ENCODE measurements at regions of chr7 and their contacts with region 1.

Region 1: DNA sequence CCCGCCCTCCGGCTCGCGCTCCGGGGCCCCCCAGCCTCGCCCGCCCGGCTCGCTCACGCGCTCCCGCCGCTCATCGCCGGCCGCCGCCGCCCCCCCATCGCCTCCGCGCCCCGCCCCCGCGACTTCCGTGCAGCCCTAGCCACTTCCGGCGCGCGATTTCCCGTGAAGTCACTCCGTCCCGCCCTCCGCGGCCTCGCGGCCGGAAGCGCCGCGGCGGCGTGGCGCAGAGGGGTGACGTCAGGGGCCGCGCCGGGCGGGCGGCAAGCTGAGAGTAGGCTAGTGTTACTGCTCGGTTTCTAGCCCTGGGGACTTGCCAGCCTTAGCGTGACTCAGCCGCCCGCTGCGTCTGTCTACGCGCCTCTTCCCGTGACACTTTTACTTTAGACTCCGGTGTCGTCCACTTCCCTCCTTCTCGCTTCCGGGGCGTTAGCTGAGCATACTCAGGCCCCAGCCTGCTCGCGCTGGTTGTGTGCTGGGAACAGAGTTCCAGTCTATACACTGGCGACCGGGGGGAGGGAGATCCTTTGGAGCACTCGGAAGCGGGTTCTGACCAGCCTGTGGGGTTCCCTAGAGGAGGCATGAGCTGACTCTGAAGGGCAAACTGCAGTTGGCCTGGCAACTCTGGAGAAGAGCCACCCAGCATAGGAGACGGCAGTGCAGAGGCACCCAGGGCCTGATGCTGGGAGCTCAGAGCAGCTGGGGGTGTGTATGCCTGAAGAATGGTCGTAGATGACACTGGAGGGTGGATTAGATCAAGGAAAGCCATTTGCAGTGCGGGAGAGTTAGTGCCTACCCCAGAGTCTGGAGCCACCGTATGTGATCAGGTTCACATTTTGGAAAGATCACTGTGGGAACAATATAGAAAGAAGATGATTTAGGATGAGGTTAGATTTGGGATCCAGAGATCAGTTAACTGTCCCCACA is at the start of gene PURB:
- DNase-seq: peak; percentile 97 to 99 (median 97)
- ATAC-seq: peak; percentile 92
- H3K4me3 ChIP-seq: peak within 1 kb of the TSS; percentile 88
- H3K4me3 Mint-ChIP-seq: peak within 1 kb of the TSS; percentile 92 to 97 (median 93)
- H3K27ac ChIP-seq: peak within 1 kb of the TSS; percentile 99
- H3K27ac Mint-ChIP-seq: peak within 1 kb of the TSS; percentile 98 to 100 (median 99)
- H3K4me1 ChIP-seq: peaks cover 26 to 50% of the 10 kb centered on the region in 2 donors
- H3K4me1 Mint-ChIP-seq: peaks cover 7 to 61% (median 46%) of the 10 kb centered on the region in 7 donors
- H3K27me3 ChIP-seq: no peaks in the 10 kb centered on the region
- H3K27me3 Mint-ChIP-seq: peaks cover 0 to 2% (median 0%) of the 10 kb centered on the region in 5 donors
- total RNA-seq, gene PURB: 16.5 to 30.5 (median 23.3) TPM

Region 2: DNA sequence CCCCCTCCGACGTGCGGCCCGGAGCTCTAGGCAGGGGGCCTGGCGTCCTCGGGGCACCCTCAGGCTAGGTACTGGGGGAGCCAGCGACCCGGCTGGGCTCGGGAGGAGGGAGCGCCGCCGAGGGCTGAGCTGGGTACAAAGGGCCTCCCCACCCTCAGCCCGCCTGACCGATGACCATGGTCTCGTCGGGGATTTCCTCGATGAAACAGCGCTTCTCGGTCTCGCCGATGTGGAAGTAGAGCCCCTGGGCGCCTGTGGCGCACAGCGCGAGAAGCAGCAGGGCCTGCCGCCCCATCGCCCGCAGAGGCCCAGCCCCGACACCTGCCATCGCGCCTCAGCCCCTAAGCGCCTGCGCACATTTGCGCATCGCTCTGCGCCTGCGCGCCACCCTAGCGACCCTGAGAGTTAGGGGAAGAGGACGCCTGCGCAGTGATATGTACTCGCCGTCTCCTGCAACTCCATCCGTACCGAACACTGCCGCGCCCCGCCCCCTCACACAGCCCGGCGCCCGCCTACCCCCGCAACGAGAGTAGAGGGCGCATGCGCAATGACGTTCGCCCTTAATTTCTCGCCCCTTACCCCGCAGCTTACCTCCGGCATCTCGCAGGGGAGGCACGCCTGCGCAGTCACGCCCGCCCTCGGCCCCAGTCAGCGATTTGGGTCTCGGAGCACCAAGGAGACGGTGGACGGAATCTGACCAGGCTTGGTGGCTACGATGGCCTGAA is 303.6 kb before region 1 on chr7 and contains the start of gene TMED4:
- CTCF ChIA-PET with region 1: no interaction called
- POLR2A ChIA-PET with region 1: interaction called, 12 read pairs
- intact Hi-C with region 1: loop called (anchors 1 kb)
- DNase-seq: peak; percentile 100
- ATAC-seq: peak; percentile 96
- H3K4me3 ChIP-seq: peak within 1 kb of the TSS; percentile 95
- H3K4me3 Mint-ChIP-seq: peak within 1 kb of the TSS; percentile 86 to 97 (median 92)
- H3K27ac ChIP-seq: peak within 1 kb of the TSS; percentile 90
- H3K27ac Mint-ChIP-seq: peak within 1 kb of the TSS; percentile 95 to 99 (median 98)
- H3K4me1 ChIP-seq: peaks cover 14 to 19% of the 10 kb centered on the region in 2 donors
- H3K4me1 Mint-ChIP-seq: peaks cover 13 to 43% (median 38%) of the 10 kb centered on the region in 7 donors
- H3K27me3 ChIP-seq: no peaks in the 10 kb centered on the region
- H3K27me3 Mint-ChIP-seq: peaks cover 0 to 12% (median 0%) of the 10 kb centered on the region in 5 donors
- total RNA-seq, gene TMED4: 70.0 to 98.5 (median 95.3) TPM

Region 3: GRCh38 chr7:44748045-44748947 is 137.4 kb before region 1 on chr7 and contains the start of gene ZMIZ2:
- CTCF ChIA-PET with region 1: no interaction called
- POLR2A ChIA-PET with region 1: interaction called, 9 read pairs
- intact Hi-C with region 1: loop called (anchors 1 kb)
- DNase-seq: peak; percentile 87 to 99 (median 93)
- ATAC-seq: peak; percentile 94
- H3K4me3 ChIP-seq: peak within 1 kb of the TSS; percentile 64
- H3K4me3 Mint-ChIP-seq: peak within 1 kb of the TSS; percentile 77 to 92 (median 88)
- H3K27ac ChIP-seq: peak within 1 kb of the TSS; percentile 98
- H3K27ac Mint-ChIP-seq: peak within 1 kb of the TSS; percentile 81 to 98 (median 92)
- H3K4me1 ChIP-seq: peaks cover 21 to 22% of the 10 kb centered on the region in 2 donors
- H3K4me1 Mint-ChIP-seq: peaks cover 22 to 63% (median 45%) of the 10 kb centered on the region in 7 donors
- H3K27me3 ChIP-seq: no peaks in the 10 kb centered on the region
- H3K27me3 Mint-ChIP-seq: no peaks in the 10 kb centered on the region
- total RNA-seq, gene ZMIZ2: 108 to 187 (median 144) TPM

Region 4: DNA sequence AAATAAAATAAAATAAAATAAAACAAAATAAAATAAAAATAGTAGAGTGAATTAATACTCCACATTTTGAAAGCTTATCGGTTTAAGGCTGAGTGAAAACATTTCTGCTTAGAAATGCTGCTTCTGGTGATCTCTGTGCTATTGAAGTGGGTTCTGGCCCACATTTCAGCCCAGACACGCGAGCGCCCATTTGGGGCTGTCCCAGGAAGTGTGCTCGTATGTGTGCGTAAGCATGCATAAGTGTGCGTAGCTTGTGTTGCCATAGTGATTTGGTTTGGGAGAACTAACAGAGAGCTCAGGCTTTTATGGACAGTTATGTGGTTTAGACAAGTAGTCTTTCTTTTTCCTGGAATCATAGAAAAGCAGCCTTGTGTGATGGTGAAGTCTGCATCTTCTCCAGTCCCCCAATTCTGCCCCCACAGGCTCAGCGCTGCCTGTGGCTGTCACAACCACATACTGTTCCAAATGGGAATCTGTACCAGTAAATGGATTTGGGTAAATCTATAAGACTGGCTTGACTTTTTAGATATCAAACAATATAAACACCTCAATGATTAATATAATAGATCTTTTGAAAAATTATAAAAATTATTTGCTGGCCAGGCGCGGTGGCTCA is 29.4 kb after region 1 on chr7:
- CTCF ChIA-PET with region 1: interaction called, 4 read pairs
- POLR2A ChIA-PET with region 1: interaction called, 5 read pairs
- intact Hi-C with region 1: loop called (anchors 1 kb)
- DNase-seq: peak in 8 of 9 donors; percentile 44 to 87 (median 74)
- ATAC-seq: peak; percentile 99
- H3K4me3 ChIP-seq: no peak overlapping the region
- H3K4me3 Mint-ChIP-seq: peak overlapping the region in 7 of 10 donors; percentile 12 to 71 (median 53)
- H3K27ac ChIP-seq: peak overlapping the region; percentile 48
- H3K27ac Mint-ChIP-seq: peak overlapping the region in 8 of 9 donors; percentile 61 to 92 (median 84)
- H3K4me1 ChIP-seq: no peaks in the 10 kb centered on the region
- H3K4me1 Mint-ChIP-seq: peaks cover 0 to 28% (median 5%) of the 10 kb centered on the region in 7 donors
- H3K27me3 ChIP-seq: no peaks in the 10 kb centered on the region
- H3K27me3 Mint-ChIP-seq: no peaks in the 10 kb centered on the region

Region 5: DNA sequence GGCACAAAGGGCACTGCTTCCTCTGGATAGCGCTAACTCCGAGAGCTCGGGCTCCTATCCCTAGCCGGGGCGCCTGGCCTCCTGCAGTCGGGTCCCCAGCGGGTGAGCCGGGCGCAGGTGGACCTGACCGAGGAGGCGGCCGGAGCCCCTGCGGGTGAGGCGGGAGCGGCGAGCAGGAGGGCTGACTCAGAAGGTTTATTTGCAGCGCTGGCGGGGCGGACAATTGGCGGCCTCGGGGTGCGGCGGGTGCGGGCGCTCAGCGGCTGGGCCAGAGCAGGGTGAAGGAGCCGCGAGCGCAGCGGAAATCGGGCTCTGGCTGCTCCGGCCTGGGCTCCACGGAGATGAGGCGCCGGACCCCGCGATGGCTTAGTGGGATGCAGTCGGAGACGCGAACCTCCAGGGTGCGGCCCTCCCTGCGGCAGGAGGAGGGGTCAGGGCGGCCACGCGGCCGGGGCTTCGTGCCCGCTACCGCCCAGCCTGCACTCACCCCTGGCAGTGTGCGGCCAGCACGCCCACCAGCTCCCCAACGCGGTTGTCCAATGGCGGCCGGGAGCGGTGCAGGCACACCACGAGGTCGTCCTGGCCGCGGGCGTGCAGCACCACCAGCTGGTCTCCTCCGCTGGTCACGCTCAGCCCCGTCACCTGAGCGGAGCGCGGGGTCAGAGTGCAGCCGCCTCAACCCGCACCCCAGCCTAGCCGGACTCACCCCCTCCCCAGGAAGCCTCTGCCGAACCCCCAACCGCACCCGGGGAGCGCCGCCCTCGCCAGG is 77.0 kb after region 1 on chr7:
- CTCF ChIA-PET with region 1: no interaction called
- POLR2A ChIA-PET with region 1: no interaction called
- intact Hi-C with region 1: no loop called
- DNase-seq: peak in 1 of 9 donors; percentile 22
- ATAC-seq: no peak
- H3K4me3 ChIP-seq: no peak overlapping the region
- H3K4me3 Mint-ChIP-seq: no peak overlapping the region
- H3K27ac ChIP-seq: no peak overlapping the region
- H3K27ac Mint-ChIP-seq: no peak overlapping the region
- H3K4me1 ChIP-seq: peaks cover 0 to 18% of the 10 kb centered on the region in 2 donors
- H3K4me1 Mint-ChIP-seq: peaks cover 6 to 22% (median 12%) of the 10 kb centered on the region in 7 donors
- H3K27me3 ChIP-seq: no peaks in the 10 kb centered on the region
- H3K27me3 Mint-ChIP-seq: no peaks in the 10 kb centered on the region

Region 6: DNA sequence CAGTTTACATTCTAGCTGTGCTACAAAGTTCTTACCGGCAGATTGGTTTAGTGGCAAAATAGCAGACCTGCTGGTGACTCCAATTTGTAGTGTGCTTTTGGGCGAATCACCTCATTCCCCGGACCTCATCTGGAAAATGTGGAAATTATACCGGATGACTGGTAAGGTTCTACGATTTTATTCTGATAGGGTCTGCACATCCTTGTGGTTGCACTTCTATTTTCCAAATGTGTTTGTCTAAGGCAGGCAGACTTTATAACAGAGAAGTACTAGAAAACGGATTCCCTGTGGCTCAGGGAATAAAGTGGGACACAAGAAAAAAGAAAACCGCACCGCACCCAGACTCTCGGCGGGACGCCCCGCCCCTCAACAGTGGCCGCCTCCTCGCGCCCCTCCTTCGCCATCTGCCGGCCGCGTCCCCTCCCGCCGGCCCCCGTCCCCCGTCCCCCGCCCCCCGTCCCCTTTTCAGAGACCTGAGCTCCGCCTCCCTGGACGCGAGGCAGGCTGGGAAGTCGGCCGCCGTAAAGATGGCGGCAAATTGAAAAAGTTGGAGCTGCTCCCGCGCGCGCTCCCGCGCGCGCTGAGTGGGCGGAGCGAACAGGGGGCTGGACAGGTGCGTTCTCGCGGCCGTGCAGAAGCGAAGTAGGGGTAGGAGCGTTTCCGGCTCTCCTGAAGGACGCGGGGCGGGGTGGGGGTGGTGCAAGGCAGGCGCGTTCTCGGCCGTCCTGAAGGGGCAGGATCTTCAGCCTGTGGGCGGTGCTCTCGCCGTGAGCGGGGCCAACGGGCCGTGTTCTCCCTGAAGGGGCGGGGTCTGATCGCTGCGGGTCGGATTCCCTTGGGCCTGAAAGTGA is 113.8 kb after region 1 on chr7:
- CTCF ChIA-PET with region 1: interaction called, 4 read pairs
- POLR2A ChIA-PET with region 1: interaction called, 9 read pairs
- intact Hi-C with region 1: loop called in 1 of 2 experiments (anchors 1 kb)
- DNase-seq: peak; percentile 92 to 99 (median 98)
- ATAC-seq: peak; percentile 93
- H3K4me3 ChIP-seq: peak overlapping the region; percentile 83
- H3K4me3 Mint-ChIP-seq: peak overlapping the region; percentile 85 to 100 (median 96)
- H3K27ac ChIP-seq: peak overlapping the region; percentile 80
- H3K27ac Mint-ChIP-seq: peak overlapping the region; percentile 82 to 99 (median 96)
- H3K4me1 ChIP-seq: peaks cover 18 to 34% of the 10 kb centered on the region in 2 donors
- H3K4me1 Mint-ChIP-seq: peaks cover 19 to 59% (median 49%) of the 10 kb centered on the region in 7 donors
- H3K27me3 ChIP-seq: no peaks in the 10 kb centered on the region
- H3K27me3 Mint-ChIP-seq: no peaks in the 10 kb centered on the region

Region 7: GRCh38 chr7:45111298-45112223 is 225.9 kb after region 1 on chr7 and contains the start of gene TBRG4:
- CTCF ChIA-PET with region 1: no interaction called
- POLR2A ChIA-PET with region 1: interaction called, 14 read pairs
- intact Hi-C with region 1: loop called (anchors 1 kb)
- DNase-seq: peak; percentile 88 to 96 (median 94)
- ATAC-seq: peak; percentile 94
- H3K4me3 ChIP-seq: peak within 1 kb of the TSS; percentile 80
- H3K4me3 Mint-ChIP-seq: peak within 1 kb of the TSS; percentile 93 to 100 (median 96)
- H3K27ac ChIP-seq: peak within 1 kb of the TSS; percentile 98
- H3K27ac Mint-ChIP-seq: peak within 1 kb of the TSS; percentile 98 to 100 (median 99)
- H3K4me1 ChIP-seq: peaks cover 17 to 45% of the 10 kb centered on the region in 2 donors
- H3K4me1 Mint-ChIP-seq: peaks cover 30 to 59% (median 50%) of the 10 kb centered on the region in 7 donors
- H3K27me3 ChIP-seq: no peaks in the 10 kb centered on the region
- H3K27me3 Mint-ChIP-seq: peaks cover 0 to 31% (median 0%) of the 10 kb centered on the region in 5 donors
- total RNA-seq, gene TBRG4: 93.7 to 143 (median 107) TPM

Region 8: GRCh38 chr7:45278763-45279398 is 393.2 kb after region 1 on chr7:
- CTCF ChIA-PET with region 1: no interaction called
- POLR2A ChIA-PET with region 1: no interaction called
- intact Hi-C with region 1: no loop called
- DNase-seq: no peak
- ATAC-seq: no peak
- H3K4me3 ChIP-seq: no peak overlapping the region
- H3K4me3 Mint-ChIP-seq: no peak overlapping the region
- H3K27ac ChIP-seq: no peak overlapping the region
- H3K27ac Mint-ChIP-seq: no peak overlapping the region
- H3K4me1 ChIP-seq: no peaks in the 10 kb centered on the region
- H3K4me1 Mint-ChIP-seq: no peaks in the 10 kb centered on the region
- H3K27me3 ChIP-seq: peaks cover 0 to 5% of the 10 kb centered on the region in 2 donors
- H3K27me3 Mint-ChIP-seq: peaks cover 21 to 57% (median 31%) of the 10 kb centered on the region in 5 donors

Measured in naive thymus-derived CD4-positive, alpha-beta T cell (primary cell).